H1 (cell line): ENCODE measurements at regions of chr9 and their contacts with region 1.

Region 1: DNA sequence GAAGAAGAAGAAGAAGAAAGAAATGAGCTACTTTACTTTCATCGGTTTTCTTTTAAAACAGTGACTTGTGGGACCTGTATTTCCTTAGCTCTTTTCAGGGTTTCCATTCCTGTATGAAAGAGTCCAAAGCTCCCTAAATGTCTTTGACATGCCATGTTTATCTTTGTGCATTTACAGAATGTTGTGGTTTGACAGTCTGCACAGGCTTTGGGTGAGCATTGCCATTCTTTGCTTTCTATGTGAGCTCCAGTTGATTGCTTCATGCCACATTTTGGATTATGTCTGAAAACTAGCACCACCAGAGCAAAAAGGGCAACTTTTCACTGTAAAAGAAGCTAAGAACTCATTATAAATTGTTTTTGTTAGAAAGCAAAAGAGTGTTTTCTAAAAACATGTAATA is 733.4 kb downstream of the TLE4 start:
- DNase-seq: no peak
- H3K4me3 ChIP-seq: no peak overlapping the region
- H3K27ac ChIP-seq: no peak overlapping the region
- H3K4me1 ChIP-seq: peaks cover 0 to 5% (median 0%) of the 10 kb centered on the region in 4 experiments; a peak in 1 of 7 replicates
- H3K27me3 ChIP-seq: no peaks in the 10 kb centered on the region
- CTCF ChIP-seq: no peak
- EP300 ChIP-seq: no peak
- POLR2A ChIP-seq: no peak
- RAD21 ChIP-seq: no peak

Region 2: DNA sequence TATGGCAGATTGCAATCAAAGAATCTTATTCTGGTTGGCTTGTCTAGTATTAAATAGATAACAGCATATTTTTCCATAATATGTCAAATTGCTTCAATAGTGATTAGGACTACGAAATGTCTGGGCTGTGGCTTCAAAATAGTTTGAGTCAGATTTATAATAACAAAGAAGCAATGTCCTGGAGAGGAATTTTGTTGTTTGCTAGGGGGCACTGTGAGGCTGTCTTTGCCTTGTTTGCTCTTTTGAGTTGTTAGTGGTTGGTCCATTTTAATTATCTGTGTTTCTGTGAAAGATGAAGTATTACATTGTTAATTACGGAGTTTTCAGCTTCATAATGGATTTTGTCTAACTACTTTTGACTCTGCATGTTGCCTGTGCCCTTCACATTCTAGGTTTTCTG is 19.8 kb before region 1 on chr9:
- CTCF ChIA-PET with region 1: interaction called, 17 read pairs
- POLR2A ChIA-PET with region 1: no interaction called
- DNase-seq: no peak
- H3K4me3 ChIP-seq: no peak overlapping the region
- H3K27ac ChIP-seq: no peak overlapping the region
- H3K4me1 ChIP-seq: peaks cover 0 to 2% (median 0%) of the 10 kb centered on the region in 4 experiments; a peak in 1 of 7 replicates
- H3K27me3 ChIP-seq: no peaks in the 10 kb centered on the region
- CTCF ChIP-seq: peak in 2 of 3 experiments; percentile 51; a peak in 3 of 4 replicates
- EP300 ChIP-seq: no peak
- POLR2A ChIP-seq: no peak
- RAD21 ChIP-seq: peak; percentile 75 to 83